Heart right ventricle (tissue), 16 donors: ENCODE measurements at regions of chr9 and their contacts with region 1.

Region 1: DNA sequence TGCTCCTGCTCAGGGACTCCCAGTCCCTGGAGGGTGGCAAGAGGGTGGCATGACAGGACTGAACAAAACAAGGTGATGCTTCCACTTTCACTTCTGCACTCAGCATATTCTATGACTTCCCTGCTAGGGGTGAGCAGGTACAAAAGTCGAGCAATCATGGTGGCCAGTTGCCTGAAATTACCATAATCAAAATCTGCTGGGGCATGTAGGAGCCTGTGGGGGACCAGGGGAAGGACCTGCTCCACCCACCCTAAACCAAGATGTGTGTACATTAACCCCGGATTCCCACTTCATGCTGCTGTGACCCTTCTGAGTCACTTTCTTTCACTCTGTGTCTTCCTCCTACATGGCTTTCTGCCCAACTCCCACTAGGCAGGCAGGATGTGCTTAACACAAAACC is 73.4 kb upstream of the PHF24 start:
- DNase-seq: no peak
- ATAC-seq: no peak
- H3K4me3 ChIP-seq: no peak overlapping the region
- H3K27ac ChIP-seq: no peak overlapping the region
- H3K4me1 ChIP-seq: no peaks in the 10 kb centered on the region
- H3K27me3 ChIP-seq: peaks cover 0 to 8% (median 0%) of the 10 kb centered on the region in 7 donors
- CTCF ChIP-seq: no peak

Region 2: DNA sequence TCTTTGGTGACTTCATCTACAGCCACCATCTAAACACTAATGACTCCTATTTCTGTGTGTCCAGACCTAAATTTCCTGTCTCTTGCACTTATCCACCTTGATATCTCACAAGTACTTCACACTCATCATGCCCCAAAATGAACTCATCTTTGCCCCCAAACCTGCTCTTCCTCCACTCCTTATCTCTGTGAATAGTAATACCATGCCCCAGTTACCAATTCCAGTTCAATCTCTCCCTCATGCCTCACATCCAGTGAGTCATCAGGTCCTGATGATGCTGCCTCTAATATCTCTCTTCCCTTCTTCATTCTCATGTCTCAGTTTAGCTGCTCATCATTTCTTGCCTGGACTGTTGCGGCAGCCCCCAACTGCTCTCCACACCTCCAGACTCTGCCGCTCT is 89.9 kb after region 1 on chr9:
- intact Hi-C with region 1: loop called in 1 of 10 experiments (anchors 5 kb)
- DNase-seq: no peak
- ATAC-seq: no peak
- H3K4me3 ChIP-seq: no peak overlapping the region
- H3K27ac ChIP-seq: no peak overlapping the region
- H3K4me1 ChIP-seq: no peaks in the 10 kb centered on the region
- H3K27me3 ChIP-seq: peaks cover 0 to 4% (median 0%) of the 10 kb centered on the region in 7 donors
- CTCF ChIP-seq: no peak